ENCODE measurements at regions of chr12 and their contacts with region 1.

Region 1: GRCh38 chr12:56448860-56449621 is at the start of gene TIMELESS:
- DNase-seq: peak; percentile 88 to 92 (median 92)
- H3K4me3 ChIP-seq: peak within 1 kb of the TSS; percentile 83 to 95 (median 92)
- H3K27ac ChIP-seq: peak within 1 kb of the TSS in 1 of 2 experiments; percentile 81
- H3K4me1 ChIP-seq: peaks cover 3 to 19% (median 9%) of the 10 kb centered on the region in 4 experiments
- H3K27me3 ChIP-seq: no peaks in the 10 kb centered on the region

Region 2: DNA sequence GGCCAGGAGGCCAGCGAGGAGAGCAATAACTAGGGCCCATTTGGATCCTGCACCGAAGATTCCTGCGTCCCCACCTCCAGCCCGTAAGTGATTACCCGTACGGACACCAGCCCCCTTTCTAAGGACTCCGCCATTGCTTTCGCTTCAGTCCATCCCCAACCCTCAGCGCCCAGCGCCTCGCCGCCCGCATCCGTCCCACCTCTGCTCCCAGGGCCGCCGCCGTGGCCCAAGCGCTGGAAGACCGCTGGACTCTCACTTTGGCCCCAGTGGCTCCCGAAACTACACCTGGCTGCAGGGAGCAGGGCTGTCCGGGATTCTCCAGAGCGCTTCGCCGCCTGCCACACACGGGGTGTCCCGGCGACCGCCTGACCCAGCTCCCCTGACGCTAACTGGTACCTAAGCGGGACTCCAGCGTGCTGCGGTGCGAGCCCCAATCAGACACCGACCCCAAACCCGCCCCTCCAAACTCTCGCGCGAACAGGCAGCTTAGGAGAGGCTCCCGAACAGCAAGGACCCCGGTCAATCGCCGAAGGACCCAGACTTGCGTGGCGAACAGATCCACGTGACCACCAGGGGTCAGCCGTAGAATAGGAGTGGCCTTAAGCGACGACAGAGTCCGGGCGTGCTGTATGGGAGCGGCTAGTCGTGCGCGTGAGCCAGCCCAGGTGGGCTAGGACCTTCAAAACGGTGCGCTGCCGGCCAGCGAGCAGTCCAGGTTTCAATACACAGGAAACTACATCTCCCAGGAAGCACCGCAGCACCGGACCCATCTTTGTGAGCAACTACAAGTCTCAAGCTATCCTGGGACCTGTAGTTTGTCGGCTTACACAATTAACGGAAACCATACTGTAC is 133.2 kb before region 1 on chr12 and contains the start of gene CNPY2:
- CTCF ChIA-PET with region 1: no interaction called
- POLR2A ChIA-PET with region 1: no interaction called
- DNase-seq: peak; percentile 95 to 98 (median 97)
- H3K4me3 ChIP-seq: peak within 1 kb of the TSS; percentile 71 to 98 (median 94)
- H3K27ac ChIP-seq: peak within 1 kb of the TSS; percentile 91 to 94
- H3K4me1 ChIP-seq: peaks cover 6 to 18% (median 17%) of the 10 kb centered on the region in 4 experiments
- H3K27me3 ChIP-seq: no peaks in the 10 kb centered on the region

Region 3: GRCh38 chr12:56461235-56462159 is 12.5 kb after region 1 on chr12:
- CTCF ChIA-PET with region 1: interaction called, 16 read pairs
- POLR2A ChIA-PET with region 1: no interaction called
- DNase-seq: peak in 1 of 3 donors; percentile 10
- H3K4me3 ChIP-seq: no peak overlapping the region
- H3K27ac ChIP-seq: no peak overlapping the region
- H3K4me1 ChIP-seq: peaks cover 2 to 4% (median 2%) of the 10 kb centered on the region in 4 experiments
- H3K27me3 ChIP-seq: no peaks in the 10 kb centered on the region

Region 4: GRCh38 chr12:56468216-56469006 is 19.4 kb after region 1 on chr12 and contains the start of gene SPRYD4:
- CTCF ChIA-PET with region 1: interaction called, 16 read pairs
- POLR2A ChIA-PET with region 1: no interaction called
- DNase-seq: peak; percentile 94 to 96 (median 96)
- H3K4me3 ChIP-seq: peak within 1 kb of the TSS; percentile 77 to 100 (median 98)
- H3K27ac ChIP-seq: peak within 1 kb of the TSS; percentile 90 to 94
- H3K4me1 ChIP-seq: peaks cover 2 to 19% (median 15%) of the 10 kb centered on the region in 4 experiments
- H3K27me3 ChIP-seq: no peaks in the 10 kb centered on the region

Measured in common myeloid progenitor, CD34-positive (primary cell).